A549 (cell line): ENCODE measurements at regions of chr20 and their contacts with region 1.

Region 1: DNA sequence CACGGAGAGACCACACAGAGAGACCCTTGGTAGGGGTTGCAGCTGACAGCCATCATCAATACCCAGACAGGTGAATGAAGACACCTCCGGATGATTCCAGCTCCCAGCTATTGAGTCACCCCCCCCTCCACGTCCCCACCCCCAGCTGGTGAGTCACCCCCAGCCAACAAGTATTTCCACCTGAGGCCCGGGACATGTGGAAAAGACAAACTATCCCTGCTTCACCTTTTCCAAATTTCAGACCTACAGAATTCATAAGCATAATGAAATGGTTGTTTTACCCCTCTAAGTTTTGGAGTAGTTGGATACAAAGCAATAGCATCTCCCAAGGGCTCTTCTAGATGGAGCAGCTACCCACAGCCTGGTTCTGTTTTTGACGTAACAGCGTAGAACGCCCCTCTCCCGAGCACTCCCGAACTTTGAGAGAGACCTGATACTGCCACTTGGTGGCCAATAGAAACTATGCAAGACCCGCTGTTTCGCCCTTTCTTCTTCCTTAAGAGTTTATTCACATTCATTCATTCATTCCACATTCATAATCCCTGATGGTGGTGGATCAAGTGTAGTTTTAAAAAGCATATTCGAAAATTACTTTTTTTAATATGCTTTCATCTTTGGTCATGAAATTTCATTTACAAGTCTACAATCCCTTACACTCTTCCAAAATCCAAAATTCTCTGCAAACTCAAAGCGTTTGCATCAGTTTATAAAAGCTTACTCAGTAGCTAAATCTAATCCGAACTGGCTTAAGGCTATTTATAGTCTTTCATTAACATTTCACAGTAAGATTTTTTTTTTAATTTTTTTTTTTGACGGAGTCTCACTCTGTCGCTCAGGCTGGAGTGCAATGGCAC is 15.1 kb upstream of the PPP1R16B start:
- DNase-seq: peak; percentile 46 to 73
- ATAC-seq: peak; percentile 73 to 91
- H3K4me3 ChIP-seq: no peak overlapping the region
- H3K27ac ChIP-seq: peak overlapping the region in 1 of 2 experiments; percentile 35; a peak in 1 of 6 replicates
- H3K4me1 ChIP-seq: peaks cover 4% of the 10 kb centered on the region; the same call in 1 of the 3 replicates
- CTCF ChIP-seq: peak; percentile 81
- EP300 ChIP-seq: no peak
- POLR2A ChIP-seq: no peak
- RAD21 ChIP-seq: peak; percentile 67 to 71

Region 2: DNA sequence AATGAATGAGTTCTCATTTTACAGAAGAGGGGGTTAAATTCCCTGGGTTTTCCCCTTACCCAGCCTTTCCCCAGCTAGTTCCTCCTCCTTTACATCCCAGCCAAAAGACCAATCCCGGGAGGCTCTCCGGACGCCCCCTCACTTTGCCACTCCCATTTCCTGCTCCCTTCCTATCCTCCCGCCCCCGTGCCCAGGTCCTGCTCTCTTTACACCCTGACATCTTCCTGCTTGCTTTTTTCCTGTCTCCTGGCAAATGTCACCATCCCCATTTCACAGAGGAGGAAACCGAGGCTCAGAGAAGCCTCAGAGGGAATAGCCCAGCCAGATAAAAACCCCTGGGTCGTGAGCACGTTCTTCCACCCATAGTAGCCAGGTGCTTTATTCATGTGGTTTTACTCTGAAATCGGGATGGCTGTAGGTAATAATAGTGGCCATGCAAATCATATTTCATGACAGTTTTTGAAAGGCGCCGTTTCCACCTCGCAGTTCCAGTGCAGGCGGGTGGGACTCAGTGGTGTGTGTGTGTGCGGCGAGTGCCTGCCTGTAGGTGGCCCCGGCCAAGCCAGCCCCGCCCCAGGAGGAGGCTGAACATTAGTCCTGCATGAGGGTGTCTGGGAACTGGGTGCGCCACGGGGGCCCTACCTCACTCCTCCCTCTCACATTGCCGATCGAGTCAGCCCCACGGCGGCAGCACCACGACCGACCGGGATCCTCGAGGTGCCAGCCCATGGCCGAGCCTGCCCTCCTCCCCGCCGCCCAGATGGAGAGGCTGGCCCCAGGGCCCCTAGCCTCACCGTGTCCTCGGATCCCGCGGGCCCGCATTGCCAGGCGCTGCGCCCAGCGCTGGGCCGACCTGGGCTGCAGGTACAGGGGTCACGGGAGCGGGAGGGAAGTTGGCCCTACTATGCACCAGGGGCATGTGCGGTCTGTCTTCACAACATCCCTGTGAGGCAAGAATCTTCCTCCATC is 188.9 kb before region 1 on chr20 and contains the start of gene ARHGAP40:
- CTCF ChIA-PET with region 1: no interaction called
- POLR2A ChIA-PET with region 1: no interaction called
- DNase-seq: no peak
- ATAC-seq: peak in 1 of 2 experiments; percentile 14; a peak in 1 of 6 replicates
- H3K4me3 ChIP-seq: no peak within 1 kb of the TSS
- H3K27ac ChIP-seq: peak within 1 kb of the TSS; percentile 34 to 65; a peak in 4 of 6 replicates
- H3K4me1 ChIP-seq: peaks cover 35% of the 10 kb centered on the region
- CTCF ChIP-seq: no peak
- EP300 ChIP-seq: no peak
- POLR2A ChIP-seq: no peak
- RAD21 ChIP-seq: no peak
- polyA plus RNA-seq, gene ARHGAP40: not detected in 2 replicates

Region 3: GRCh38 chr20:38764567-38765355 is 25.7 kb before region 1 on chr20:
- CTCF ChIA-PET with region 1: interaction called, 51 read pairs
- POLR2A ChIA-PET with region 1: no interaction called
- DNase-seq: peak; percentile 86
- ATAC-seq: peak; percentile 99
- H3K4me3 ChIP-seq: 0 out of 3 replicates have a peak overlapping the region, but pooled peaks have one; percentile 11
- H3K27ac ChIP-seq: peak overlapping the region; percentile 79 to 84
- H3K4me1 ChIP-seq: peaks cover 29% of the 10 kb centered on the region
- CTCF ChIP-seq: no peak
- EP300 ChIP-seq: no peak
- POLR2A ChIP-seq: no peak
- RAD21 ChIP-seq: no peak; a peak in 1 of 5 replicates

Region 4: GRCh38 chr20:38779247-38780097 is 11.0 kb before region 1 on chr20:
- CTCF ChIA-PET with region 1: interaction called, 16 read pairs
- POLR2A ChIA-PET with region 1: no interaction called
- DNase-seq: no peak
- ATAC-seq: no peak
- H3K4me3 ChIP-seq: no peak overlapping the region
- H3K27ac ChIP-seq: no peak overlapping the region
- H3K4me1 ChIP-seq: no peaks in the 10 kb centered on the region
- CTCF ChIP-seq: no peak
- EP300 ChIP-seq: no peak
- POLR2A ChIP-seq: no peak
- RAD21 ChIP-seq: no peak

Region 5: GRCh38 chr20:38805502-38805957 is 15.1 kb after region 1 on chr20 and contains the start of gene PPP1R16B:
- CTCF ChIA-PET with region 1: interaction called, 17 read pairs
- POLR2A ChIA-PET with region 1: no interaction called
- DNase-seq: peak in 1 of 2 experiments; percentile 26
- ATAC-seq: peak; percentile 84 to 91
- H3K4me3 ChIP-seq: peak within 1 kb of the TSS; percentile 61
- H3K27ac ChIP-seq: peak within 1 kb of the TSS; percentile 49 to 70; a peak in 5 of 6 replicates
- H3K4me1 ChIP-seq: no peaks in the 10 kb centered on the region
- CTCF ChIP-seq: no peak
- EP300 ChIP-seq: no peak
- POLR2A ChIP-seq: no peak; the same call in 1 of the 2 replicates
- RAD21 ChIP-seq: no peak
- polyA plus RNA-seq, gene PPP1R16B: 0.17 and 0.28 TPM in 2 replicates

Region 6: GRCh38 chr20:38827770-38828281 is 37.4 kb after region 1 on chr20:
- CTCF ChIA-PET with region 1: no interaction called
- POLR2A ChIA-PET with region 1: no interaction called
- DNase-seq: no peak
- ATAC-seq: no peak
- H3K4me3 ChIP-seq: no peak overlapping the region
- H3K27ac ChIP-seq: 0 out of 6 replicates have a peak overlapping the region, but pooled peaks of 1 of the 2 experiments have one; percentile 22
- H3K4me1 ChIP-seq: peaks cover 30% of the 10 kb centered on the region
- CTCF ChIP-seq: no peak
- EP300 ChIP-seq: no peak
- POLR2A ChIP-seq: no peak
- RAD21 ChIP-seq: no peak